H1 (cell line): ENCODE measurements at regions of chrX and their contacts with region 1.

Region 1: GRCh38 chrX:107716816-107717700 is 58.5 kb downstream of the TSC22D3 start:
- DNase-seq: peak in 1 of 2 experiments; percentile 52
- H3K4me3 ChIP-seq: peak overlapping the region; percentile 45 to 73 (median 60)
- H3K27ac ChIP-seq: no peak overlapping the region
- H3K4me1 ChIP-seq: peaks cover 0 to 17% (median 8%) of the 10 kb centered on the region in 4 experiments; a peak in 5 of 7 replicates
- H3K27me3 ChIP-seq: peaks cover 0 to 9% (median 0%) of the 10 kb centered on the region in 4 experiments; a peak in 1 of 7 replicates
- CTCF ChIP-seq: no peak
- EP300 ChIP-seq: no peak
- POLR2A ChIP-seq: peak in 1 of 2 experiments; percentile 74; a peak in 2 of 3 replicates
- RAD21 ChIP-seq: no peak

Region 2: GRCh38 chrX:107654872-107655761 is 61.9 kb before region 1 on chrX:
- CTCF ChIA-PET with region 1: interaction called, 325 read pairs
- POLR2A ChIA-PET with region 1: interaction called, 13 read pairs
- DNase-seq: peak; percentile 50 to 75
- H3K4me3 ChIP-seq: peak overlapping the region in 1 of 4 experiments; percentile 48; a peak in 1 of 8 replicates
- H3K27ac ChIP-seq: no peak overlapping the region; the same call in 1 of the 2 replicates
- H3K4me1 ChIP-seq: peaks cover 0 to 5% (median 0%) of the 10 kb centered on the region in 4 experiments; a peak in 2 of 7 replicates
- H3K27me3 ChIP-seq: no peaks in the 10 kb centered on the region
- CTCF ChIP-seq: peak; percentile 74 to 89 (median 87)
- EP300 ChIP-seq: peak in 1 of 2 experiments; percentile 32; a peak in 1 of 3 replicates
- POLR2A ChIP-seq: no peak
- RAD21 ChIP-seq: peak; percentile 49 to 59; a peak in 3 of 4 replicates

Region 3: DNA sequence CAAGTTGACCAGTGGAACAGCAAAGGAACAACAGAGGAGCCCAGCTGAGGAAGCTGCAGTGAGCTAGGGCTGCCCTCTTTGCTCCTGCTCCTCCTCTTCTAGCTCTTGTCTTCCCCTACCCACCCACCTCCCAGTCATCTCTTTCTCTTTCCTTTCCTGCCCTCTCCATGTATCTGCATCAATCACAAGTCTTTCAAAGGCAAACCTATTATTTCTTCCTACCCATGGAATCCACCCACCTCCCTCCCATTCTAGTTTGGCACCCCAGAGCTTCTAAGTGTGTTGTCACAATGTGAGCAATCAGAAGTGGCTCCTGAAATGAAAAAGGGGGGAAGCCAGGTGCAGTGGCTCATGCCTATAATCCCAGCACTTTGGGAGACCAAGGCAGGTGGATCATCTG is 10.7 kb before region 1 on chrX:
- CTCF ChIA-PET with region 1: interaction called, 8 read pairs
- POLR2A ChIA-PET with region 1: interaction called, 11 read pairs
- DNase-seq: no peak
- H3K4me3 ChIP-seq: no peak overlapping the region
- H3K27ac ChIP-seq: no peak overlapping the region
- H3K4me1 ChIP-seq: no peaks in the 10 kb centered on the region
- H3K27me3 ChIP-seq: no peaks in the 10 kb centered on the region
- CTCF ChIP-seq: no peak
- EP300 ChIP-seq: no peak
- POLR2A ChIP-seq: no peak
- RAD21 ChIP-seq: no peak

Region 4: DNA sequence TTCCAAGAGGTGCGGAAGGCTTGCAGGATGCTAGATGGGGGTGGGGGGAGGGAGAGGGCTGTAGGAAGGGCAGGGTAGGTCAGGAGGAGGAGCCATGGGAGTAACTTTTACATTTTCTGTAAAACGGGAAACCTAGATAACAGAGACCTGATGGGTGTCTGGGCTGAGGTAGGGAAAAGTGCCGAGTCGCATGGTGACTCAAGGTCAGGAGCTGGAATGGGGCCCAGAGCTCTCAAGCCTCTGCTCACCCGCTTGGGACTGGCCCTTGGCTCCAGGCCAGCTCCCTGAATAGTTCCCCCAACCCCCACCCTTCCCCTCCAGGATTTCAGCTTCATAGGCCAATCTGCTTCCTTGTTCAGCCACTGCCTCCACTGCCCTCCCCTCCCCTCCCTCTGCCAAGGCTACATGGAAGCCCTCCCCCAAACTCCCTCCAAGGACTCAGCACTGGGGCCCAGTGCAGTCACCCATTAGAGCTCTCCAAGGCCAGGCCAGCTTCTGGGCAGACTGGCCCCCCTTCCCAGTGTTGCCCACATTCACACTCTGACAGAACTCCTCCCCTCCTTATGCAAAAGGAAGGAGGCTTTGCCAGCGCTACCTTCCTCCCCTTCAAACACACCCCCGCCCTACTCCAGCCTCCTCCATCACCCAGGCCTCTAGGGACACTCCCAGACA is 14.9 kb after region 1 on chrX:
- CTCF ChIA-PET with region 1: interaction called, 50 read pairs
- POLR2A ChIA-PET with region 1: interaction called, 51 read pairs
- DNase-seq: no peak
- H3K4me3 ChIP-seq: no peak overlapping the region
- H3K27ac ChIP-seq: no peak overlapping the region; the same call in 1 of the 2 replicates
- H3K4me1 ChIP-seq: peaks cover 0 to 19% (median 10%) of the 10 kb centered on the region in 4 experiments; a peak in 6 of 7 replicates
- H3K27me3 ChIP-seq: no peaks in the 10 kb centered on the region
- CTCF ChIP-seq: no peak
- EP300 ChIP-seq: no peak
- POLR2A ChIP-seq: 0 out of 3 replicates have a peak, but pooled peaks of 1 of the 2 experiments have one; percentile 32
- RAD21 ChIP-seq: no peak

Region 5: DNA sequence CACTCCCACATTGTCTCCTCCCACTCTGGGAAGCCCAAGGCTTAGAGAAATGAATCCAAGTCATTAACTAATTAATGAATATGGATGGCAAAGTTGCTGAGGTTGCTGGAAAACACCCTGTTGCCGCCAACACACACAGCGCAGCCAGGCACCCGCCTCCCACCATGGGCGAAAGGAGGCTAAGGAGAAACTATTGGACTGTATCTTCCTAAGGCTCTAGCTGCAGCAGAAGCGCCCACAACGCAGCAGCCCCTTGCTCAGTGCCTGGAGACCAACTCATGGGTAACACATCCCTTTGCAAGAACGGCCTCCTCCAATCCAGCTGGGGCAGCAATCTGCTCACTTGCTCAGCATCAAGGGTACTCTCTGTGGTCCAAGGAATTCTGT is 24.3 kb after region 1 on chrX:
- CTCF ChIA-PET with region 1: interaction called, 8 read pairs
- POLR2A ChIA-PET with region 1: interaction called, 13 read pairs
- DNase-seq: no peak
- H3K4me3 ChIP-seq: peak overlapping the region in 1 of 4 experiments; percentile 62; a peak in 4 of 8 replicates
- H3K27ac ChIP-seq: no peak overlapping the region; the same call in 1 of the 2 replicates
- H3K4me1 ChIP-seq: peaks cover 2 to 15% (median 7%) of the 10 kb centered on the region in 4 experiments; a peak in 6 of 7 replicates
- H3K27me3 ChIP-seq: peaks cover 0 to 1% (median 0%) of the 10 kb centered on the region in 4 experiments; a peak in 2 of 7 replicates
- CTCF ChIP-seq: no peak
- EP300 ChIP-seq: no peak
- POLR2A ChIP-seq: no peak
- RAD21 ChIP-seq: no peak

Region 6: DNA sequence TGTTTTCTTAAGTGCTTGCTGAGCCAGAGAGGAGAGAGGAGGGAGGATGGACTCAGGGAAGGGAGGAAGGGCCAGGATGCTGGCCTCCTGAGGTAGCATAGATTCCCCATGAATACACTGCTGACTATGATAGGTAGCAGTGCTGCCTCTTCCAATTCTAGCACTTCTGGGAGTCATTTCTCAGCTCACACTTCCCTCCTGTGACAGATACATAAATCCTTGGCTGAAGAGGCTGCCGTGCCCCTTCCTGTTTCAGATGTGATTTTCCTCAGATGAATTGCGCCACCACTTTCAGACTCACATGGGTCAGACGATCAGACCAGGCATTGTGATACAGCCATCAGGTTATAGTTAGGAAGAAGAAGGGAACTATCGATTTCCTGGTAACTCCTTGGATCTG is 36.1 kb after region 1 on chrX:
- CTCF ChIA-PET with region 1: interaction called, 10 read pairs
- POLR2A ChIA-PET with region 1: interaction called, 4 read pairs
- DNase-seq: no peak
- H3K4me3 ChIP-seq: no peak overlapping the region
- H3K27ac ChIP-seq: no peak overlapping the region
- H3K4me1 ChIP-seq: peaks cover 0 to 9% (median 2%) of the 10 kb centered on the region in 4 experiments; a peak in 4 of 7 replicates
- H3K27me3 ChIP-seq: no peaks in the 10 kb centered on the region
- CTCF ChIP-seq: no peak
- EP300 ChIP-seq: no peak
- POLR2A ChIP-seq: no peak
- RAD21 ChIP-seq: no peak

Region 7: DNA sequence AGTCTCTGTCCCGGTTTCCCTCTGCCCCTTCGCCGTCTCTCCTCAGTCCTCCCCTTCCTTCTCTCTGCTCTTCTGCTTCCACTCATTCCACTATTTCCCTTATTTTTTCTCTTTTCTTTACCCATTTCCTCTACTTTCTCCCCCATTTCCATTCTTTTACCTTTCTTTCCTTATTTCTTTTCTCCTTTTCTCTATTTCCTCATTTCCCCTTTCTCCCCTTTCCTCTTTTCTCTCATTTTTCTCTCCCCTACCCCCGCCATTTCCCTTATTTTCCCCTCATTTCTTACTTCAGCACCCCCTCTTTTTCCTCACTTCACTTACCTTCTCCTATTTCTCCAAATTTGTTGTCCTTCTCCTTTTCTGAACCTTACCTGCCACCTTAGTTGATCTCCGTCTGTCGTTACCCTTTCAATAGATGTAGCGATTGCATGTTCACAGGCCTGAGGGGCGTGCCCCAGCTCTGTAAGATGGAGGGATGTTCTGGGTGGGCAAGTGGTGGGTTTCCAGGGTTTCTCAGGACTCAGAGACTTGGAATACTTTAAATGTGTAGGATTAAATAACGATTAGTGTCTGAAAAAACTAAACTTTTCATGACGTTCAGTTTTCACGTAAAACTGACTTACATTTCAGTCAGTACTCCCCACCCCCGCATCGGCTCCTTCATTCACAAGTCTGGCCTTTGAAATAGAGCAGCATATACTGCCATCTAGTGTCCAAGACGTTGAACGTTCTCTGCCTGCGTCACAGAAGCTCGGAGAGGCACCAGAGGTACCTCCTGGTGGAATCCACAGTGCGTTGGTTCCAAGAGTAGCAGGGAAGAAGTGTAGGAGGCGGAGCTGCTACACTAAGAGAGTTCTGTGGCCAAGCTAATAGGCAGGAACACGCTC is 59.8 kb after region 1 on chrX:
- CTCF ChIA-PET with region 1: interaction called, 18 read pairs
- POLR2A ChIA-PET with region 1: interaction called, 21 read pairs
- DNase-seq: peak; percentile 53 to 55
- H3K4me3 ChIP-seq: peak overlapping the region; percentile 26 to 62 (median 41); a peak in 5 of 8 replicates
- H3K27ac ChIP-seq: no peak overlapping the region
- H3K4me1 ChIP-seq: peaks cover 0 to 10% (median 6%) of the 10 kb centered on the region in 4 experiments
- H3K27me3 ChIP-seq: peaks cover 20 to 39% (median 32%) of the 10 kb centered on the region in 4 experiments
- CTCF ChIP-seq: peak; percentile 42 to 74 (median 67)
- EP300 ChIP-seq: no peak
- POLR2A ChIP-seq: no peak
- RAD21 ChIP-seq: peak; percentile 82 to 90